Breast epithelium (tissue), 4 donors: ENCODE measurements at regions of chr11 and their contacts with region 1.

Region 1: DNA sequence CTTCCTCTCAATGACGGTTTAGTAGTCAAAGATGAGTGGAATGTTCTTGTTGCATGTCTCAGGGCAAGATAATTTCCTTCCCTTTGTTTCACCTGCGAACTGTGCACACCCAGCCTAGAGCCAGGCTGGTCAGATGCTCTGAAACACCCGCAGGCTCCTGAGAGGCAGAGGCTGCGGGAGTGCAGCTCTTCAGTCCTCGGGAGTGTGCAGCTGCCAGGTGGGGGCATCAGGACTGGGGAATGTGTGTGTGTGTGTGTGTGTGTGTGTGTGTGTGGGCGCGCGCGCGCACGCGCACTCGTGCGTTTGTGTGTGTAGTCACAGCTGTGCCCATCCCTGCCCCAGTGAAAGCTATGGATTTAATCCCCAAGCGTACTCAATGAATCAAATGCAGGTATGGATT is 136.2 kb upstream of the NTM start:
- DNase-seq: no peak
- H3K4me3 ChIP-seq: no peak overlapping the region
- H3K27ac ChIP-seq: no peak overlapping the region
- H3K4me1 ChIP-seq: no peaks in the 10 kb centered on the region
- H3K27me3 ChIP-seq: peaks cover 0 to 15% of the 10 kb centered on the region in 2 donors
- CTCF ChIP-seq: no peak
- POLR2A ChIP-seq: no peak

Region 2: DNA sequence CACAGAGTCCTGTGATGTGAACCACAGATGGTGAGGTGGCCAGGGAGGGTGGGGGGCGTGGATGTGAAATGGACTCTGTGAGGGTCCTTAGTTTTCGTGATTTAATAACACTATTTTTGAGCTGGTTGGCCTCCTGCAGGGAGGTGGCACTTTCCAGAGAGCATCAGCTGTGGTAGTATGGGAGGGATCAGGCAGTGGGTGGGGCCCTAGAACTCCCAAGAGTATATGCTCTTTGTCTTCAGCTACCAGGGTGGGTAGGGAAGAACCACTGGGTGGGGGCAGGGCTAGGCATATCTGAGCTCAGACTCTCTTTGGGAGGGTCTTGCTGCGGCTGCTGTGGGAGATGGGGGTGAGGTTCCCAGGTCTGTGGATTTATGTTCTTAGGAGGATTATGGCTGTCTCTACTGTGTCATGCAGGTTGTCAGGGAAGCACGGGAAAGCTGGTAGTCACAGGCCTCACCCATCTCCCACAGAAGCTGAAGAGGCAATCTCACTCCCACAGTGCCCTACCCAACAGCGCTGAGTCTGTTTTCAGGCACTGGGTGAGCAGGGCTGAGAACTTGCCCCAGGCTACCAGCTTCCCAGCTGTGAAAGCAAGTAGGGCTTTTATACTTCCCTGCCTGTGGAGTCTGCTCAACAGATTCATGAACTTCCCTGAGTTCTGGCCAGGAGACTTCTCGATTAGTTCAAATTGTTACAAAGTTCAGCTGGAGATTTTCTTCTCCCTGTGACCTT is 270.0 kb before region 1 on chr11:
- intact Hi-C with region 1: loop called (anchors 5 kb)
- DNase-seq: no peak
- H3K4me3 ChIP-seq: no peak overlapping the region
- H3K27ac ChIP-seq: no peak overlapping the region
- H3K4me1 ChIP-seq: no peaks in the 10 kb centered on the region
- H3K27me3 ChIP-seq: no peaks in the 10 kb centered on the region
- CTCF ChIP-seq: no peak
- POLR2A ChIP-seq: no peak

Region 3: GRCh38 chr11:132639986-132640385 is 1405.8 kb after region 1 on chr11:
- intact Hi-C with region 1: loop called (anchors 5 kb)
- DNase-seq: no peak
- H3K4me3 ChIP-seq: no peak overlapping the region
- H3K27ac ChIP-seq: no peak overlapping the region
- H3K4me1 ChIP-seq: no peaks in the 10 kb centered on the region
- H3K27me3 ChIP-seq: no peaks in the 10 kb centered on the region
- CTCF ChIP-seq: no peak
- POLR2A ChIP-seq: no peak